Activated naive CD4-positive, alpha-beta T cell treated with anti-CD3 and anti-CD28 coated beads for 36 hours (primary cell): ENCODE measurements at regions of chr10 and their contacts with region 1.

Region 1: GRCh38 chr10:98134431-98135221 is at the start of gene R3HCC1L:
- DNase-seq: peak; percentile 94
- H3K4me3 Mint-ChIP-seq: peak within 1 kb of the TSS; percentile 89
- H3K27ac Mint-ChIP-seq: peak within 1 kb of the TSS; percentile 96
- H3K4me1 Mint-ChIP-seq: peaks cover 36% of the 10 kb centered on the region
- H3K27me3 Mint-ChIP-seq: no peaks in the 10 kb centered on the region
- total RNA-seq, gene R3HCC1L: 13.4 to 13.6 TPM

Region 2: GRCh38 chr10:97412891-97413304 is 721.7 kb before region 1 on chr10:
- CTCF ChIA-PET with region 1: no interaction called
- intact Hi-C with region 1: loop called (anchors 10 kb)
- DNase-seq: peak; percentile 88
- H3K4me3 Mint-ChIP-seq: peak overlapping the region; percentile 49
- H3K27ac Mint-ChIP-seq: peak overlapping the region; percentile 87
- H3K4me1 Mint-ChIP-seq: peaks cover 52% of the 10 kb centered on the region
- H3K27me3 Mint-ChIP-seq: no peaks in the 10 kb centered on the region

Region 3: DNA sequence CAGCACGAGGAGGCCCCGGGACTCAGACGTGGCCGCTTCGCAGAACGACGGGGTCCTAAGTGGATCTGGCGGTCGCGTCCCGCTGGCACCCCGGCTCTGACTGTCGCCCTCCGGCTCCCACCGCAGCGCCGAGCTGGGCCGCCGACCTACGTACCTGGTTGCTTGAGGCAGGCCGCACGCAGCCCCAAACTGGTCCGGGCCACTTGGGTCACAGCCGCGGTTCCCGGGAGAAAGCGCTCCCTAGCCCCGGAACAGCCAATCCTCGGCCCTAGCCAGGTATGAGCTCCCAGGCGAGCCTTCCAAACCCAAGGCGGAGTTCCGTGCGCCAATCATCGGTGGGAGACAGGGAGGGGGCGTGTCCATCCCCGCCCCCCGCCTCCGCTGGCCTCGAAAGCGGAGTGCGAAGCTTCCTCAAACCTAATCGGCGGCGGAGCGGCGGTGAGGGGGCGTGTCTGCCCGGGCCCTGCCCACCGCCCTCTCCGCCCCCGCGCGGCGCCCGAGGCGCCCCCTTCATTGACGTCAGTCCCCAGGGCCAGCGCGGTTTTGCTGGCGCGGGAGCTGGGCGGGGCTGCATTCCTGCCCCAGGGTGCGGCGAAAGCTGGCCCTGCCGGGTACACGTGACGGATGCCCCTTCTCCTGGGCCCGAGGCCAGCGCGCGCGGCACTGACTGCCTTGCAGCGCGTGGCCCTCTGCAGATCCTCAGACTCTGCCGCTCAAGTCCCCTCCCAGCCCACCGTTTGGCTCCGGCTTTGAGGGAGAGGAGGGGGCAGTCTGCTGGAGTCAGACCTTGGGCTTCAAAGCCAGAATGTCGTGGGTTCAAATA is 447.5 kb before region 1 on chr10 and contains the start of gene AVPI1:
- CTCF ChIA-PET with region 1: no interaction called
- intact Hi-C with region 1: loop called (anchors 5 kb)
- DNase-seq: peak; percentile 96
- H3K4me3 Mint-ChIP-seq: peak within 1 kb of the TSS; percentile 81
- H3K27ac Mint-ChIP-seq: no peak within 1 kb of the TSS
- H3K4me1 Mint-ChIP-seq: peaks cover 12% of the 10 kb centered on the region
- H3K27me3 Mint-ChIP-seq: no peaks in the 10 kb centered on the region
- total RNA-seq, gene AVPI1: 1.5 to 1.9 TPM

Region 4: GRCh38 chr10:97849687-97850402 is 284.8 kb before region 1 on chr10 and contains the start of gene GOLGA7B:
- CTCF ChIA-PET with region 1: no interaction called
- intact Hi-C with region 1: loop called (anchors 5 kb)
- DNase-seq: peak; percentile 62
- H3K4me3 Mint-ChIP-seq: peak within 1 kb of the TSS; percentile 77
- H3K27ac Mint-ChIP-seq: no peak within 1 kb of the TSS
- H3K4me1 Mint-ChIP-seq: peaks cover 34% of the 10 kb centered on the region
- H3K27me3 Mint-ChIP-seq: no peaks in the 10 kb centered on the region
- total RNA-seq, gene GOLGA7B: 0.25 to 0.31 TPM

Region 5: DNA sequence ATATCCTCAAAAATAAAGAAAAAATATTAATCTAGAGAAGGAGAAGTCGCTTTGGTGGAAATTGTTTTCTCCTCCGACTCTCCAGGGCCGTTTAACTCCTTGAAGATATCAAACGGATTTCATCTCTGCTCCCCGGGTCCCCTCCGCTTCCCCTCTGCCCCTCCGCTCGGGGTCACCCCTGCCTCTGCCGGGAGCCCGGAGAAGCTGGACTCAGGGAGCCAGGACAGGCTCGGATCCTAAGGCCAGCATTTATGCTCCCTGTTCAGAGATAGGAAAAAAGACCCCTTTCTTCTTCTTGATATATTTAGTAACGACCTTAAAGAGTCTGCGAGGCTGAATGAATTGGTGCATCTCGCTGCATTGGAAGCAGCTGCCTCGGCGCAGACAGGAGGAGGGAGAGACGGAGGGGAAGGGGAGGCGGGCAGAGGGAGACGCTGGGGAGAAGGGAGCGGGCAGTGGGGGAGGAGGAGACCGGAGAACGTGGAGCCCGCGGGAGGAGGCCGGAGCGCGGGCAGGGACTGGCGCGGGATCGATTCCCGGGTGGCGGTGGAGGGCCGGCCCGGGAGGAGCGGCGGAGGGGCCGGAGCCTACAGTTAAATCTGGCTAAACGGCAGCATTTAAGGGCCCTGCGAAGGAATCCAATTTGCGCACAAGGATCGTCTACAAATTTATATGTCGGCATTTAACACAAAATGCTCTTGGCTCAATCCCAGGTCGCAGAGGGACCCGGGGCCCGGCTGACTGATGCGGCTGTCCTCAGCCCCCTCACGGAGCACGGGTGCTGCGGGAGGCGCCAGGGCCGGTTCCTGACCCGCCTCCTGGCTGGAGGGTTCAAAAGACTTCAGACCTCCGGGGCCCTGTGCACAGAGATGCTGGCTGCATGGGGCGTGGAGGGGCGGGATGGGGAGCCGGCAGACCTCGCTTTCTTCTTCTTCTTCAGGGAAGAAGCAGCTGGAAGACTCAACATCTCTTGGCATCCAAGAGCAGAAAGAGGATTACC is 159.8 kb before region 1 on chr10:
- CTCF ChIA-PET with region 1: no interaction called
- intact Hi-C with region 1: no loop called
- DNase-seq: no peak
- H3K4me3 Mint-ChIP-seq: no peak overlapping the region
- H3K27ac Mint-ChIP-seq: no peak overlapping the region
- H3K4me1 Mint-ChIP-seq: no peaks in the 10 kb centered on the region
- H3K27me3 Mint-ChIP-seq: peaks cover 62% of the 10 kb centered on the region

Region 6: DNA sequence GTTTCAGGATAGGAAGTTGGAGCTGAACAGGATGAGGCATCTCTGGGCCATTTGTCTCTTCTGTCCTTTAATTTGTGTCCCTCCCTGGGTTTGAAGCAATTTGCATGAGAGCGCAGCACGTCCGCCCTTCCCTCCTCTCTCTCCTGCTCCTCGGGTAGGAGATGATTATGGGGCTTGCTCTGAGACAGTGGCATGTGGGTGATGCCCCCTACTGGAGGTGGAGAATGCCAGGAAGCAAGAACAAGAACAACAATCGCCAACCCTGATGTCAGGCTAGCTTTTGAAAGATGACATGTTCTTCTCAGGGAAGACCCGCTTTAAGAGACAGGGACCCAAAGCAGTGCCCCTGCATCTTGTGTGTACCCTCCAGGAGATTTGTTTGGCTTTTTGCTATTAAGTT is 197.3 kb after region 1 on chr10:
- CTCF ChIA-PET with region 1: no interaction called
- intact Hi-C with region 1: no loop called
- DNase-seq: peak; percentile 48
- H3K4me3 Mint-ChIP-seq: no peak overlapping the region
- H3K27ac Mint-ChIP-seq: no peak overlapping the region
- H3K4me1 Mint-ChIP-seq: no peaks in the 10 kb centered on the region
- H3K27me3 Mint-ChIP-seq: peaks cover 9% of the 10 kb centered on the region

Region 7: DNA sequence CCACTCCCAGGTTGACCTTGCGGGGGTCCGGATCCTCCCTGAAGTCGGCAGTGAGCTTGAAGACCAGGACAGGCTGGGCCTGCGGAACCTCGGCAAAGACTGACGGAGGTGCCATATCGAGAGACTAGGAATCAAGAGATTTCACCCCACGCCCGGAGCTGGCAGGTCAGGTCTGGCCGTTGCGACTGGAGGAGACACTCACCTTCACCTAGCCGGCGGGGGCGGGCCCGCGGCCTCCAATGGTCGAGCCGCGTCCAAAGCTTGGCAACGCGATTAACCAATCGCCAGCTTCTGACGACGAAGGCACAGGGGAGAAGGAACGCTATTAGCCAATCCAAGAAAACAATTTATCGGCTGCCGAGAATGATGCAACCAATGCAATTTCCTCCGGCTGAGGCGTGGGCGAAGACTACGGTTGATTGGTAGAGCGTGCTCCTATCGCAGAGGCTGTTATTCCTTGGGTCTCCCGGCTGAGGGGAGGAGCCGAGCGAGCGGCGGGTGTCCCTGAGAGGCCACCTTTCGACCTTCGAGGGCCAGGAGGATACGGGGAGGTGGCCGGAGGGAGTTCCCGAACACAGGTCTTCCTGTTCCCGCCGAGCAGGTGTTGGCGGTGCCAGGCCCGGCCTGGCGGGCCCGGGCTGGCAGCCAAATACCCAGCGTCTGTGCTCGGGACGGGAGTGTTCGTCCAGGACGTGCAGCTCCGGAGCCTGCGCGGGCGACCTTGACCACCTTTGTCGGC is 1296.0 kb after region 1 on chr10 and contains the start of gene GOT1:
- CTCF ChIA-PET with region 1: no interaction called
- intact Hi-C with region 1: loop called (anchors 10 kb)
- DNase-seq: peak; percentile 99
- H3K4me3 Mint-ChIP-seq: peak within 1 kb of the TSS; percentile 95
- H3K27ac Mint-ChIP-seq: peak within 1 kb of the TSS; percentile 90
- H3K4me1 Mint-ChIP-seq: peaks cover 38% of the 10 kb centered on the region
- H3K27me3 Mint-ChIP-seq: no peaks in the 10 kb centered on the region
- total RNA-seq, gene GOT1: 62.6 to 67.3 TPM